Calu3 (cell line): ENCODE measurements at regions of chr2 and their contacts with region 1.

Region 1: GRCh38 chr2:8761529-8762164 is 75.8 kb downstream of the KIDINS220 start:
- DNase-seq: peak; percentile 2
- H3K4me3 Mint-ChIP-seq: no peak overlapping the region
- H3K27ac Mint-ChIP-seq: no peak overlapping the region
- H3K4me1 Mint-ChIP-seq: no peaks in the 10 kb centered on the region
- H3K27me3 Mint-ChIP-seq: no peaks in the 10 kb centered on the region
- CTCF ChIP-seq: no peak

Region 2: GRCh38 chr2:8694737-8695136 is 66.9 kb before region 1 on chr2:
- CTCF ChIA-PET with region 1: interaction called, 4 read pairs
- intact Hi-C with region 1: loop called (anchors 2 kb)
- DNase-seq: no peak
- H3K4me3 Mint-ChIP-seq: no peak overlapping the region
- H3K27ac Mint-ChIP-seq: no peak overlapping the region
- H3K4me1 Mint-ChIP-seq: peaks cover 27% of the 10 kb centered on the region
- H3K27me3 Mint-ChIP-seq: no peaks in the 10 kb centered on the region
- CTCF ChIP-seq: no peak